Naive thymus-derived CD8-positive, alpha-beta T cell (primary cell): ENCODE measurements at regions of chr19 and their contacts with region 1.

Region 1: DNA sequence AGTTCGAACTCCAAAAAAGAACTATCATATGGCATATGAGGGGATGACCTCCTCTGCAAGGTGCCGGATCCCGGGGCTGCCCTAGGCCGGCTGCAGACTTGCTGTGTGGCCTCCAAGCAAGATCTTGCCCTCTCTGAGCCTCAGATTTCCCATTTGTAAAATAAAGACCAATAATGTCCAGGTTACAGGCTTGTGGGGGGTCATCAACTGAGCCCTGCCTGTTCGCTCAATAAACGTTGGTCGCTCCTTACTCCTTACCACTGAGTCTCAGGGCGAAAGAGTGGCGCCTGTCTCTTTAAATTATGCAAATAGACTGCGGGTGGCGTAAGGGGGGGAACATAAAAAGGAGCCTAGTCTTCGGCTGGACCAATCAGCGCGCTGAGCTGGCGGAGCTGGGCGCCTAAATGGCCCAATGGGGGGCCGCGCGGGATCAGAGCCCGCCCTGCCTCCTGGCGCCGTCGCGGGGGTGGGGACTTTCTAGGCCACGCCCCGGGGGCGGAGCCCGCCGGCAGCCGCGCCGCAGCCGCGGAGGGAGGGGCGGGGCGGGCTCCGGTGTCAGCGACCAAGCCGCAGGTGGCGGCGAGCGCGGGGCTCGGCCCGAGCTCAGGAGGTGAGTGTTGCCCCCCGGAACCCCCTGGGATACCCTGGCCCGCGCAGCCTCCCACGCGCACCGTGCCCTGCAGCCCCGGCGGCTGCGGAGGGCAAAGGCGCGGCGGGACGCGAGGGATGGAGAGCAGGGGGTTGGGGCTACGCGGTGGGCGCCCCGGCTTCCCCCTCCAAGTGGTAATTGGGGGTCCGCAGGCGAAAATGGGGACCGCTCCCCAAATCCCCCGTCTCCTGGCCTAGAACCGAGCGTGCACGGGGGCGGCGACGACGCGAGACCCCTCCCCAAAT is 3.8 kb upstream of the FCHO1 start:
- DNase-seq: peak; percentile 90 to 97 (median 94)
- ATAC-seq: peak; percentile 90
- H3K4me3 Mint-ChIP-seq: peak overlapping the region; percentile 71 to 97 (median 90)
- H3K27ac Mint-ChIP-seq: peak overlapping the region in 9 of 10 donors; percentile 26 to 89 (median 71)
- H3K4me1 Mint-ChIP-seq: peaks cover 23 to 56% (median 51%) of the 10 kb centered on the region in 4 donors
- H3K27me3 Mint-ChIP-seq: no peaks in the 10 kb centered on the region

Region 2: GRCh38 chr19:17605761-17606745 is 141.4 kb before region 1 on chr19:
- POLR2A ChIA-PET with region 1: no interaction called
- DNase-seq: peak; percentile 75 to 91 (median 86)
- ATAC-seq: peak; percentile 91 to 97
- H3K4me3 Mint-ChIP-seq: peak overlapping the region; percentile 70 to 90 (median 82)
- H3K27ac Mint-ChIP-seq: peak overlapping the region; percentile 2 to 82 (median 72)
- H3K4me1 Mint-ChIP-seq: peaks cover 6 to 20% (median 7%) of the 10 kb centered on the region in 4 donors
- H3K27me3 Mint-ChIP-seq: peaks cover 19 to 38% (median 25%) of the 10 kb centered on the region in 5 donors

Region 3: GRCh38 chr19:17658666-17659065 is 88.8 kb before region 1 on chr19:
- POLR2A ChIA-PET with region 1: no interaction called
- DNase-seq: no peak
- ATAC-seq: no peak
- H3K4me3 Mint-ChIP-seq: no peak overlapping the region
- H3K27ac Mint-ChIP-seq: no peak overlapping the region
- H3K4me1 Mint-ChIP-seq: no peaks in the 10 kb centered on the region
- H3K27me3 Mint-ChIP-seq: peaks cover 7 to 44% (median 20%) of the 10 kb centered on the region in 5 donors

Region 4: DNA sequence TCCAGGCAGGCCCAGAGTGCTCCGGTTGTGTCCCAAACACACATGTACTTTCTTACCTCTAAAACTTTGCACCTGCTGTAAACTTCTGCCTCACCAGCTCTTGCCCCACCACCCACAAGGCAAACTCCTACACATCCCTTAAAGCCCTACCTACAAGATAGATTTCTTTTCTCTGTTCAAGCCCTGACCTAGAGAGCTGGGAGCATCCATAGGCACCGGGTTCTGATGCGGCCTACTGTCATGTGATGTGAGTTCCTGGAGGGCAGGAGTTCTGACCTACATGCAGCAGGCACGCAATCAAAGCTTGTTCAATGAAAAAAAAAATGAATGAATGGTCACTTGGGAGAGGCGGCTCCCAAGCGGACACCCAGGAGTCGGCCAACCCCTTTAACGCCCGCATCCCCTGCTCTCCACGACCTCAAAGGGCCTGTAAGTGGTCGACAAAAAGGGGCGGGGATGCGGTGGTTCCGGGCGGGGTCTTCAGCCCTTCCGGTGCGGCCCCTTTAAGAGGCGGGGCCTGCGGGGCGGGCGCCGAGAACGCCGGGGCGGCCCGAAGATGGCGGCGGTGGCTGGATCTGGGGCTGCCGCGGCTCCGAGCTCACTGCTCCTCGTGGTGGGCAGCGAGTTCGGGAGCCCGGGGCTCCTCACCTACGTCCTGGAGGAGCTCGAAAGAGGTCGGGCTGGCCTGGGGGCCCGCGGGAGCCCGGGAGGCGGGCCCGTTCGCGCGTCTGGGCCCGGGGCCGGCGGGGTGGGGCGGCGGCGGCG is 28.3 kb before region 1 on chr19 and contains the start of gene MAP1S:
- POLR2A ChIA-PET with region 1: interaction called, 15 read pairs
- DNase-seq: peak; percentile 35 to 67 (median 58)
- ATAC-seq: peak; percentile 91 to 96
- H3K4me3 Mint-ChIP-seq: peak within 1 kb of the TSS; percentile 82 to 95 (median 89)
- H3K27ac Mint-ChIP-seq: peak within 1 kb of the TSS; percentile 76 to 95 (median 90)
- H3K4me1 Mint-ChIP-seq: peaks cover 22 to 47% (median 44%) of the 10 kb centered on the region in 4 donors
- H3K27me3 Mint-ChIP-seq: peaks cover 0 to 2% (median 0%) of the 10 kb centered on the region in 5 donors
- polyA plus RNA-seq, gene MAP1S: 13.8 to 40.0 (median 18.7) TPM

Region 5: GRCh38 chr19:17784201-17785008 is 37.0 kb after region 1 on chr19:
- POLR2A ChIA-PET with region 1: no interaction called
- DNase-seq: peak; percentile 57 to 86 (median 72)
- ATAC-seq: peak; percentile 68 to 80
- H3K4me3 Mint-ChIP-seq: peak overlapping the region in 1 of 10 donors; percentile 26
- H3K27ac Mint-ChIP-seq: peak overlapping the region in 6 of 10 donors; percentile 20 to 90 (median 81)
- H3K4me1 Mint-ChIP-seq: peaks cover 5 to 21% (median 16%) of the 10 kb centered on the region in 4 donors
- H3K27me3 Mint-ChIP-seq: no peaks in the 10 kb centered on the region